Right ventricle myocardium inferior (tissue), 1 donor: ENCODE measurements at regions of chr3 and their contacts with region 1.

Region 1: GRCh38 chr3:14410503-14411165 is 8.2 kb downstream of the SLC6A6 start:
- DNase-seq: peak; percentile 80
- ATAC-seq: peak; percentile 47

Region 2: DNA sequence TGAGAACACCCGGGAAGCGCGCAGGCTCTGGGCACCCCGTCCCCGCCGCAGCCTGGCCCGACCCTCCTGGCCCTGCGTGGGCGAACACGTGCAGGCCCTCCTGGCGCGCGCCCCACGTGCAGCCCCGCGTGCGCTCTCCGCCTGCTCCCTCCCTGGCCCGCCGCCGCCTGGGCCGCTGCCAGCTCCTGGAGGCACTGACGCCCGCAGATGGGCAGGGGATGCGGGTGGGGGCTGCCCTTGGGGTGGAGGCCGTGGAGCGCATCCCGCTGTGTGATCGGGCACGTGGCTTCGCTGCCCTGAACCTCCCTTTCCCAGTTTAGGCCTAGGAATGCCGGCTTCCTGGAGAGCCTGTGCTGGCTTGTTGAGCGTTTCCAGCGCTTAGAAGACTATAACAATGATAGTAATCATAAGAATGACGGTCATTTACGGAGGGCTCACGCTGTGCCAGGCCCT is 112.8 kb before region 1 on chr3:
- intact Hi-C with region 1: no loop called
- DNase-seq: no peak
- ATAC-seq: no peak

Region 3: DNA sequence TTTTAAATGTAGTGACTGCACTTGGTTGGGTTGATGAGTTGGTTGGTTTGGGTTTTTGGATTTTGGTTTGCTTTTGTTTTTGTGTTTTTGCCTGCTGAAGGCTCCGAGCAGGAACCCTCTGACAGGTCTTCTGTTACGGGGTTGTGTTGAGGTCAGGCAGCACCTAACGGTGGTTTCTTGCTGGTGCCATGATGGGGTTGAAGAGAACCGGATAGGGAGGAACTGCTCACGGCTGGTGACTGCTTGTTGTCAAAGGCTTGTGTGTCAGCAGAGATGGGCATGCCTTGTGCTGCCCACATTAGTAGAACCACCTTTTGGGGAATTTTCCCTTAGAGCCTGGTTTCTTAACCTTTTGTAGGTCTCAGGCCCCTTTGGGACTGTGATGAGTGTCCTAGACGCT is 33.7 kb after region 1 on chr3:
- intact Hi-C with region 1: loop called (anchors 2 kb)
- DNase-seq: no peak
- ATAC-seq: no peak